Ascending aorta (tissue), 2 donors: ENCODE measurements at regions of chr19 and their contacts with region 1.

Region 1: DNA sequence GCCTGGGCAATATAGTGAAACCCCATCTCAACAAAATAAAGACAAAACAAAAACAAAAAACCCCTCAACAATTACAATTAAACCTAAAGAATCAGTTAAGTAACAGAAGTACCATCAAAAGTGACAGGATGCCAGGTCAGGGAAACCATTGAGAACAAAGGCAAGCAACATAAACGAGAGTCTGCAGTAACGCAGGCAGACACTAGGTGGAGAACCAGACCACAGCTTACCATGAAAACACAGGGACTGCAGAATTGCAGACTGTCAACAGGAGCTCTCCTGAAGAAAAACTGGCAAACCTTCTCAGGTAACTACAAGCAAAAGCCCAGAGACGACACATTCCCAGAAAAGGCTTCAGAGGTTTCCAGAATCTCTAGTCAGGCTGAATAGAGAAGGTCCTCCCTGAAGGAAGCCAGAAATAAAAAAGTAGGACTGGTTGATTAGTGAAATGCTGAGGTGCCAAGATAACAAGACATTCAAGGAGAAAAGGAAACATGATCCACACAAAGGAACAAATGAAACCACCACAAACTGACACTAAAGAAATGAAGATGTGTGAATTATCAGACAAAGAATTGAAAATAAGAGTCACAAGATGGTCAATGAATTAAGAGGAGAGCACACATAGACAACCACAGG is 2.2 kb upstream of the ZNF665 start:
- DNase-seq: peak; percentile 21 to 89
- H3K4me3 ChIP-seq: no peak overlapping the region
- H3K27ac ChIP-seq: no peak overlapping the region
- H3K4me1 ChIP-seq: peaks cover 0 to 4% of the 10 kb centered on the region in 2 donors
- H3K27me3 ChIP-seq: no peaks in the 10 kb centered on the region
- CTCF ChIP-seq: peak; percentile 71 to 91 (median 90)

Region 2: DNA sequence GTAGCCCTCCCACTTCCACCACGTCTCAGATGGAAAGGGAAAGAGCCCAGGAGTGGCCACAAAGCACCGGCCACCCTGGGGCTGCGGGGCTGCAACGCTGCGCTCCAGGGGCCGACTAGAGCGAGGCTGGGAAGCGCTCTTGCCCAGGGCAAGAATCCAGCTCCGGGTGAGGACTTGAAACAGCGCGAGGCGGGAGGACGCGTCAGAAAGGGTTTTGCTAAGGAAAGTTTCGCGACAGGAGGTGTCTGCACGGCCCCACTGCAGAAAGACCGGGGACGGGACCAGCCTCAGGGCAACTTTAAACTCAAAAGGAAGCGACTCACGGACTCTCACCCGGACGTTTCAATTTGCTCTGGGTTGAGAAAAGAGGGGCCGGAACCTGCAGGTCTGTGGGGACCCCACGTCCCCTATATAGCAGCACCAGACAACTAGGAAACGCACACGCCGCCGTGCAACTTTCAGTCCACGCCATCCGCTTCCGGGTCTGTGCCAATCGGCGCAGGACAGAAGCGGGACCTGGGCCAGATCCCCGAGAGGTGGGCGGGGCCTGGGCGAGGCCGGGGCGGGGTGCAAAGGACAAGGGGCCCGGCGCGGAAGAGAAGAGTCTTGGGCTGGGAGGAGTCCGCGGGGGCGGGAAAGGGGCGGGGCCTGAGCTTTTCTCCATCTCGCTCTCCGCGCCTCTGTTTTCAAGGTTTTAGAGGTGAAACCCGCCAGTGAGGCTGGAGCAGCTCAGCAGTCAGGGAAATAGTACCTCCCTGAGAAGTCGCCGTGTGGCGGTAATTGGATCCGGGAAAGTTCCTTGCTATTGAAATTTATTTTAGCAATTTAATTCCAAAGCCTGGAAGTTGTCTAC is 232.8 kb before region 1 on chr19 and contains the start of gene ZNF816:
- intact Hi-C with region 1: loop called (anchors 5 kb)
- DNase-seq: peak; percentile 92 to 99
- H3K4me3 ChIP-seq: peak within 1 kb of the TSS; percentile 71 to 74
- H3K27ac ChIP-seq: peak within 1 kb of the TSS; percentile 81 to 87
- H3K4me1 ChIP-seq: peaks cover 0 to 9% of the 10 kb centered on the region in 2 donors
- H3K27me3 ChIP-seq: no peaks in the 10 kb centered on the region
- CTCF ChIP-seq: no peak
- total RNA-seq, gene ZNF816: 7.1 TPM

Region 3: DNA sequence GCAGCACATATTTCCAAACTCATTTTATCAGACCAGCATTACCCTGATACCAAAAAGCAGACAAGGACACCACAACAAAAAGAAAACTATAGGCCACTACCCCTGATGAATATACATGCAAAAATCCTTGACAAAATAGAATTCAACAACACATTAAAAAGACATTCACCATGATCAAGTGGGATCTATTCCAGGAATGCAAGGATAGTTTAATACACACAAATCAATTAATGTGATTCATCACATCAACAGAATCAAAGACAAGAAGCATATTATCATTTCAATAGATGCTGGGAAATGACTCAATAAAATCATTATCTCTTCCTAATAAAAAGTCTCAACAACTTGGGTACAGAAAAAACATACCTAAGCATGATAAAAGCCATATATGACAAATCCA is 47.7 kb before region 1 on chr19:
- intact Hi-C with region 1: no loop called
- DNase-seq: no peak
- H3K4me3 ChIP-seq: no peak overlapping the region
- H3K27ac ChIP-seq: no peak overlapping the region
- H3K4me1 ChIP-seq: no peaks in the 10 kb centered on the region
- H3K27me3 ChIP-seq: no peaks in the 10 kb centered on the region
- CTCF ChIP-seq: no peak

Region 4: DNA sequence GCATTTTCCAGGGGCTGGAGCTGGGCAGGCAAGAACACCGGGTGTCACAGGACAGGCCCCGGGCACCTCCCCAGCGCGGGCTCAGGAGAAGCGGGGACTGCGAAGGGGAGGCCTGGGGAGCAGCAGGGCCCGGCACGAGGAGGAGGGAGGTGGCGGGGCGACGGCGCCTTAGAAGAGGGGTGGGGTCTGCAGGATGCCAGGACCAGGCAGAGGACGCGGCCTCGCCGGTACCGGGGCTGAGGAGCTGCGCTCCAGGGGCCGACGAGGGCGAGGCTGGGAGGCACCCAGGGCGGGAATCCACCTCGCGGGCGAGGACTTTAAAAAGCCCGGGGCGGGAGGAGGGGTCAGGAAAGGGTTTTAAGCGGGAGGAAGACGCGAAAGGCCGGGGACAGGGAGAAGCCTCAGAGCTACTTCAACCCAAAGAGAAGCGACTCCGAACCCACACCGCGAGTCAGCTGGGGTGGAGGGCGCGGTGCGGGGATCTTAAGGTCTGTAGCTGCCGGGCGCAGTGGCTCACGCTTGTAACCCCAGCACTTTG is 37.2 kb before region 1 on chr19:
- intact Hi-C with region 1: loop called (anchors 1 kb)
- DNase-seq: peak in 1 of 2 donors; percentile 65
- H3K4me3 ChIP-seq: peak overlapping the region; percentile 78 to 86
- H3K27ac ChIP-seq: peak overlapping the region; percentile 78 to 82
- H3K4me1 ChIP-seq: no peaks in the 10 kb centered on the region
- H3K27me3 ChIP-seq: no peaks in the 10 kb centered on the region
- CTCF ChIP-seq: no peak

Region 5: DNA sequence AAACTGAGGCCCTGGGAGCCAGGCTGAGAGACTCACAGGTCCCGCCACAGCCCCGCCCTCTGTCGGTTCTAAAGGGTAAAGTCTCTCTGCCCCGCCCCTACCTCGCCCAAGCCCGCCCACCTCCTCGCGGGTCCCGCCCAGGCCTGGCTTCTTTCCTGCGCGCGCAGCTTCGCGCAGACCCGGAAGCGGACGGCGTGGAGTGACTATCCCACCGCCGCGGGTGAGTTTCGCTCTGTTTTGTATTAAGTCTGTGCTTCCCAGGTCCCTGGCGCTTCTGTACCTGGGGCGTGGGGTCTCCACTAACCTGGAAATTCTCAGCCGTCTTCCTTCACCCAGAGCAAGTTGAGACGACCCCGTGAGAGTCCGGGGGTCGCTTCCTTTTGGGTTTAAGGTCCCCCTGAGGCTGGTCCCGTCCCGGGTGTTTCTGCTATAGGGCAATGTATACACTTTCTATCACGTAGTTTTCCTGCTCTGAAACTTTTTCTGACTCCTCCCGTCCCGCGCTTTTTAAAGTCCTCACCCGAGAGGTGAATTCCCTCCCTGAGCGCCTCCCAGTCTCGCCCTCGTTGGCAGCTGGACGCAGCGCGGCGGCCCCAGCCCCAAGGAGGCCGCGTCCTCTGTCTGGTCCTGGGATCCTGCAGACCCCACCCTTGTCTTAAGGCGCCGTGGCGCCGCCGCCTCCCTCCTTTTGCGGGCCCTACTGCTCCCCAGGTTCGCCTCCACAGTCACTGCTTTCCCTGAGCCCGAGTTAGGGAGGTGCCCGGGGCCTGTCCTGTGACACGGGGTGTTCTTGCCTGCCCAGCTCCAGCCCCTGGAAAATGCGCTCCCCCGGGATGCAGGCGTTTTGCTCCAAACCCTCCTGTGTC is 199.8 kb after region 1 on chr19 and contains the start of gene ZNF765:
- intact Hi-C with region 1: loop called (anchors 1 kb)
- DNase-seq: peak; percentile 82 to 97
- H3K4me3 ChIP-seq: peak within 1 kb of the TSS; percentile 65 to 68
- H3K27ac ChIP-seq: peak within 1 kb of the TSS; percentile 80 to 83
- H3K4me1 ChIP-seq: peaks cover 0 to 13% of the 10 kb centered on the region in 2 donors
- H3K27me3 ChIP-seq: no peaks in the 10 kb centered on the region
- CTCF ChIP-seq: peak; percentile 47 to 58 (median 55)
- total RNA-seq, gene ZNF765: 3.5 TPM

Region 6: GRCh38 chr19:53511933-53512374 is 316.6 kb after region 1 on chr19:
- intact Hi-C with region 1: loop called (anchors 1 kb)
- DNase-seq: peak in 1 of 2 donors; percentile 74
- H3K4me3 ChIP-seq: no peak overlapping the region
- H3K27ac ChIP-seq: no peak overlapping the region
- H3K4me1 ChIP-seq: no peaks in the 10 kb centered on the region
- H3K27me3 ChIP-seq: no peaks in the 10 kb centered on the region
- CTCF ChIP-seq: peak; percentile 28 to 60 (median 44)

Region 7: GRCh38 chr19:54029930-54030490 is 834.6 kb after region 1 on chr19:
- intact Hi-C with region 1: loop called (anchors 10 kb)
- DNase-seq: peak in 1 of 2 donors; percentile 70
- H3K4me3 ChIP-seq: no peak overlapping the region
- H3K27ac ChIP-seq: no peak overlapping the region
- H3K4me1 ChIP-seq: no peaks in the 10 kb centered on the region
- H3K27me3 ChIP-seq: no peaks in the 10 kb centered on the region
- CTCF ChIP-seq: peak in 2 of 3 experiments; percentile 19 to 44